Activated naive CD4-positive, alpha-beta T cell treated with anti-CD3 and anti-CD28 coated beads for 36 hours (primary cell): ENCODE measurements at regions of chr7 and their contacts with region 1.

Region 1: DNA sequence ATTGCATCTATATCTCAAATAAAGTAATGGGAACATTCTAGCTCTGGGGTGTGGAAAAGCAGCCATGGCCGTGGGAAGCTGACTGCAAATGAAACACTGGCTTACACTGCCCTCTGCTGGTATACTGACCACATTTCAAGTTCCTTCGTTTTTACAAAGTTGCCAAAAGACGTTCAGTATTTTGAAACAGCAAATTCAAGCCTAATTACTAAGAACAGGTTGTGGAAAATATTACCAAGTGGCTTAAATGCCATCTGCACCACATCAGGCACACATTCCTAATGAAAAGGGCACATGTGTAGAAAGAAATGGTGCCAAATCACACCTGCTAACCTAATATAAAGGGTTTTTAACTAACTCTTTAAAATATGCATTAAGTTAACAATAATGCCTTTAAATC is 83.9 kb downstream of the JAZF1 start:
- DNase-seq: peak; percentile 57
- H3K4me3 Mint-ChIP-seq: no peak overlapping the region
- H3K27ac Mint-ChIP-seq: no peak overlapping the region
- H3K4me1 Mint-ChIP-seq: peaks cover 3% of the 10 kb centered on the region
- H3K27me3 Mint-ChIP-seq: no peaks in the 10 kb centered on the region

Region 2: GRCh38 chr7:27210441-27211083 is 886.2 kb before region 1 on chr7:
- CTCF ChIA-PET with region 1: no interaction called
- intact Hi-C with region 1: loop called (anchors 5 kb)
- DNase-seq: peak; percentile 67
- H3K4me3 Mint-ChIP-seq: no peak overlapping the region
- H3K27ac Mint-ChIP-seq: no peak overlapping the region
- H3K4me1 Mint-ChIP-seq: peaks cover 20% of the 10 kb centered on the region
- H3K27me3 Mint-ChIP-seq: peaks cover 80% of the 10 kb centered on the region

Region 3: GRCh38 chr7:27689591-27690164 is 407.0 kb before region 1 on chr7:
- CTCF ChIA-PET with region 1: no interaction called
- intact Hi-C with region 1: loop called (anchors 10 kb)
- DNase-seq: peak; percentile 39
- H3K4me3 Mint-ChIP-seq: no peak overlapping the region
- H3K27ac Mint-ChIP-seq: no peak overlapping the region
- H3K4me1 Mint-ChIP-seq: no peaks in the 10 kb centered on the region
- H3K27me3 Mint-ChIP-seq: peaks cover 4% of the 10 kb centered on the region

Region 4: GRCh38 chr7:27739909-27740448 is 356.7 kb before region 1 on chr7 and contains the start of gene TAX1BP1:
- CTCF ChIA-PET with region 1: interaction called, 3 read pairs
- intact Hi-C with region 1: loop called (anchors 10 kb)
- DNase-seq: peak; percentile 96
- H3K4me3 Mint-ChIP-seq: peak within 1 kb of the TSS; percentile 96
- H3K27ac Mint-ChIP-seq: peak within 1 kb of the TSS; percentile 98
- H3K4me1 Mint-ChIP-seq: peaks cover 35% of the 10 kb centered on the region
- H3K27me3 Mint-ChIP-seq: no peaks in the 10 kb centered on the region
- total RNA-seq, gene TAX1BP1: 84.1 to 87.9 TPM

Region 5: DNA sequence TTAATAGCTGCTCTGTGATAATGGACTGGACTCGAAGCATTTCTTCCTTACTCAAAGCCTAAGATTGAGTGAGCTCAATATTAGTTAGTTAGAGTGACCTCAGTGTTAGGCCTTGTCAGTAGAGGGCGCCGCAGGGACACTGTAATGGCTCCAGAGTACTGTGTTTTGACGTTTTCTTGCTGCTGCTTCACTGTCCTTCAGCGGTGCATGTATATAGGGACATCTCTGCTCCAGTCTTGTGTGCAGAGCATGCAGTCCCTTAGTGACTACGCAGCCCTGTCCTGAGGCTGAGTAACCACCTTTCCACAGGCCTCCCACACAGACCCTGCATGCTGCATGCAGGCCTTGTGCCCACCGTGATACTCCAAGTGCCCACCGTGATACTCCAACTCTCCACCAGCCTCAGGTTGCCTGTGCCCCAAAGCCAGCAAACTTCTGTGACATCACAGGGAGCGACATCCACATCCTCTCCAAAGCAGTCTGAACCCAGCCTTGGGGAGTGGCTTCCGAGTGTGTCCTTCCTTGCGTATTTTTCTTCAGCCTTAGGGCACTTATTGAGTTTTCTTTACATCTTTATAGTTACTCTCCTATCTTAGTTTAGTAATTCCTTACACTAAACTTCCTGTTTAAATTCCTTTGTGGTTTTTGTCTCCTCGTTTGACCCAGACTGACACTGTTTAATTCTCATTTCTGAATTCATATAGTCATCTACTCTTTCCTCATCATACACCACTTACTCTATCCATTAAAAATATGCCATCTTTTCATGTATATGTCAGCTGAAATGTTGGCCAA is 34.3 kb before region 1 on chr7:
- CTCF ChIA-PET with region 1: interaction called, 30 read pairs
- intact Hi-C with region 1: loop called (anchors 2 kb)
- DNase-seq: peak; percentile 74
- H3K4me3 Mint-ChIP-seq: no peak overlapping the region
- H3K27ac Mint-ChIP-seq: no peak overlapping the region
- H3K4me1 Mint-ChIP-seq: peaks cover 3% of the 10 kb centered on the region
- H3K27me3 Mint-ChIP-seq: peaks cover 3% of the 10 kb centered on the region

Region 6: GRCh38 chr7:28078036-28078901 is 18.4 kb before region 1 on chr7:
- CTCF ChIA-PET with region 1: interaction called, 11 read pairs
- intact Hi-C with region 1: no loop called
- DNase-seq: peak; percentile 67
- H3K4me3 Mint-ChIP-seq: no peak overlapping the region
- H3K27ac Mint-ChIP-seq: no peak overlapping the region
- H3K4me1 Mint-ChIP-seq: no peaks in the 10 kb centered on the region
- H3K27me3 Mint-ChIP-seq: no peaks in the 10 kb centered on the region

Region 7: GRCh38 chr7:28121496-28121895 is 24.8 kb after region 1 on chr7:
- CTCF ChIA-PET with region 1: interaction called, 10 read pairs
- intact Hi-C with region 1: no loop called
- DNase-seq: no peak
- H3K4me3 Mint-ChIP-seq: no peak overlapping the region
- H3K27ac Mint-ChIP-seq: no peak overlapping the region
- H3K4me1 Mint-ChIP-seq: peaks cover 12% of the 10 kb centered on the region
- H3K27me3 Mint-ChIP-seq: no peaks in the 10 kb centered on the region